Panc1 (cell line): ENCODE measurements at regions of chr6 and their contacts with region 1.

Region 1: GRCh38 chr6:142218446-142218845 is 71.4 kb downstream of the VTA1 start:
- DNase-seq: no peak
- ATAC-seq: no peak
- H3K4me3 ChIP-seq: no peak overlapping the region
- H3K27ac ChIP-seq: no peak overlapping the region
- H3K4me1 ChIP-seq: no peaks in the 10 kb centered on the region
- H3K27me3 ChIP-seq: no peaks in the 10 kb centered on the region
- CTCF ChIP-seq: no peak

Region 2: DNA sequence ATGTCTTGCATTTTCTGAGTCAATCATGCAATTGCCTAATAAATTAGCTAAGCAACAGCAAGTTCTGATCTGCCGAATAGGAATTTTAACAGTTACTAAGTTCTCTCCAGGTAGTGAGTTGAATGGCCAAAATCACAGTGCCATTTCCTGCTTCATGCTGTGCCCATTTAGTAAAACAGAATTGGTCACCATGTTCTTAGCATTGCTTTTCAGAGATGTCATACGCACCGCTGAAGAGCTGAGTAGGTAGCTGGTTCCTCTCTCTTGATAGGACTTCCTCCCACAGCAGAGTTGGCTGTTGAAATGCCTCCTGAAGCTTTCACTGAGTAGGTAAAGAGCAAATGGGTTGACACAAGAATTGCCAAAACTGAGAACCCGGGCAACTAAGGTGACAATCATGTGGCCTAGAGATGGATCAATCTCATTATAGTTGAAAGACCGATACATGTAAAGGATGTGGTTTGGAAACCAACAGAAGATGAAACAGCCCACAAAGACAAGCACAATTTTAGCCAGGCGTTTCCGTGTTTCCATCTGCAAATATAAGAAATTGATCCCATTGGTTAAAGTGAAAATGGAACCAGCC is 142.8 kb before region 1 on chr6:
- CTCF ChIA-PET with region 1: no interaction called
- POLR2A ChIA-PET with region 1: no interaction called
- in situ Hi-C with region 1: no loop called
- intact Hi-C with region 1: no loop called
- DNase-seq: no peak
- ATAC-seq: no peak
- H3K4me3 ChIP-seq: no peak overlapping the region
- H3K27ac ChIP-seq: no peak overlapping the region
- H3K4me1 ChIP-seq: no peaks in the 10 kb centered on the region
- H3K27me3 ChIP-seq: no peaks in the 10 kb centered on the region
- CTCF ChIP-seq: no peak

Region 3: GRCh38 chr6:142146828-142147662 is 71.4 kb before region 1 on chr6 and contains the starts of genes NMBR and VTA1:
- CTCF ChIA-PET with region 1: no interaction called
- POLR2A ChIA-PET with region 1: no interaction called
- in situ Hi-C with region 1: no loop called
- intact Hi-C with region 1: no loop called
- DNase-seq: peak; percentile 99
- ATAC-seq: peak; percentile 99
- H3K4me3 ChIP-seq: peak within 1 kb of the TSS; percentile 76 to 97
- H3K27ac ChIP-seq: peak within 1 kb of the TSS; percentile 93
- H3K4me1 ChIP-seq: peaks cover 17% of the 10 kb centered on the region
- H3K27me3 ChIP-seq: no peaks in the 10 kb centered on the region
- CTCF ChIP-seq: peak; percentile 97
- total RNA-seq, gene NMBR: not detected
- total RNA-seq, gene VTA1: 72.1 TPM

Region 4: GRCh38 chr6:142187209-142187608 is 31.2 kb before region 1 on chr6:
- CTCF ChIA-PET with region 1: no interaction called
- POLR2A ChIA-PET with region 1: interaction called, 10 read pairs
- in situ Hi-C with region 1: no loop called
- intact Hi-C with region 1: no loop called
- DNase-seq: no peak
- ATAC-seq: no peak
- H3K4me3 ChIP-seq: no peak overlapping the region
- H3K27ac ChIP-seq: no peak overlapping the region
- H3K4me1 ChIP-seq: peaks cover 4% of the 10 kb centered on the region; the same call in 1 of the 2 replicates
- H3K27me3 ChIP-seq: no peaks in the 10 kb centered on the region
- CTCF ChIP-seq: no peak

Region 5: GRCh38 chr6:142246960-142247359 is 28.5 kb after region 1 on chr6:
- CTCF ChIA-PET with region 1: no interaction called
- POLR2A ChIA-PET with region 1: interaction called, 10 read pairs
- in situ Hi-C with region 1: no loop called
- intact Hi-C with region 1: no loop called
- DNase-seq: no peak
- ATAC-seq: no peak
- H3K4me3 ChIP-seq: no peak overlapping the region
- H3K27ac ChIP-seq: no peak overlapping the region; the same call in 1 of the 2 replicates
- H3K4me1 ChIP-seq: no peaks in the 10 kb centered on the region
- H3K27me3 ChIP-seq: no peaks in the 10 kb centered on the region
- CTCF ChIP-seq: no peak